Activated CD4-positive, alpha-beta memory T cell treated with anti-CD3 and anti-CD28 coated beads, Interleukin-2, amount 10 ng/mL, durations not matched to agents 7 days and 5 days (primary cell): ENCODE measurements at regions of chr12 and their contacts with region 1.

Region 1: GRCh38 chr12:11202811-11203210 is 16.1 kb upstream of the TAS2R42 start:
- DNase-seq: no peak
- H3K4me3 Mint-ChIP-seq: no peak overlapping the region
- H3K27ac Mint-ChIP-seq: no peak overlapping the region
- H3K4me1 Mint-ChIP-seq: no peaks in the 10 kb centered on the region
- H3K27me3 Mint-ChIP-seq: no peaks in the 10 kb centered on the region

Region 2: DNA sequence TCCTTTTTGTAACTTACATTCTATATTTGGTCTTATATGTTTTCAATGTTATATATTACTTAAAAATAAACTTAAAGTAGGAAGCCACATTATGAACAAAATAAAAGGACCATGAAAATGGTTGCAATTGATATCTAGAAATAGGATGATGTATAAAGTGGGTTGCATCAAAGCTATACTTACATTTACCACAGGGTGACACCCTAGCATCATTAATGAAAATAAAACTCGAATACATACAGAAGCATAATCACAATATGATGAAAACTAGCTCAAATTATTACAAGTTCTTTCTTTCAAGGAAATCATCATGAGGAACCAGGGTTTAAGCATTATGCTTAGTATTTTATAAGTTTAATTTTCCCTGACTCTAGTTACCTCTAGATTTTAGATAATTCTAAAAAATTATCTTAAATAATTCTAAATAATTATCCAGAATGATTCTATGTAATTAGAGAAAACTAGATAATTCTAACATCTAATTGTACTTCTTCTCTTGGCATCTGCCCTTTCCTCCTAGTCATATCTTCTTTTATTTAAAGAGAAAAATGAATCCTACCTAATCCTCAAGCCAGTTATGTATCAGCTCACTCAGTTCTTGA is 431.6 kb before region 1 on chr12:
- CTCF ChIA-PET with region 1: interaction called, 26 read pairs
- POLR2A ChIA-PET with region 1: no interaction called
- DNase-seq: no peak
- H3K4me3 Mint-ChIP-seq: no peak overlapping the region
- H3K27ac Mint-ChIP-seq: no peak overlapping the region
- H3K4me1 Mint-ChIP-seq: no peaks in the 10 kb centered on the region
- H3K27me3 Mint-ChIP-seq: peaks cover 44% of the 10 kb centered on the region

Region 3: GRCh38 chr12:11130999-11131398 is 71.8 kb before region 1 on chr12:
- CTCF ChIA-PET with region 1: no interaction called
- POLR2A ChIA-PET with region 1: no interaction called
- DNase-seq: no peak
- H3K4me3 Mint-ChIP-seq: no peak overlapping the region
- H3K27ac Mint-ChIP-seq: no peak overlapping the region
- H3K4me1 Mint-ChIP-seq: no peaks in the 10 kb centered on the region
- H3K27me3 Mint-ChIP-seq: no peaks in the 10 kb centered on the region

Region 4: DNA sequence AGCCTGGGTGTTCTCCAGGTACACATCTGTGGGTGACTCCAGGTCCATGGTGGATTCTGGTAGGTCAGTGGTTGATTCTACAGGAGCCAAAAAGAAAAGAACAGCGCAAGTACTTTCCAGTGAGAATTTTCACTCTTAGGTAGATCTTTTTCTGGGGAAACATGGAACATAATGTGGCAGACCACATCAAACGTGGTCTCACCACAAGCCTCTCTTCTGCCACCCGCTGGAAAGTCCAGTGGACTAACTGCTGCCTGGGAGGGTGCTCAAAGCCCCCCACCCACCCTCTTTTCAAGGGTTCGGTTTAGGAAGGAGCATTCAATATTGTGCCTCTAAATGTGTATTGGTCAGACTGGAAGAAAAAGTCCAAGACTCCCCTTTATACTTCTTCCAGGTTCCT is 228.7 kb after region 1 on chr12:
- CTCF ChIA-PET with region 1: no interaction called
- POLR2A ChIA-PET with region 1: no interaction called
- DNase-seq: no peak
- H3K4me3 Mint-ChIP-seq: no peak overlapping the region
- H3K27ac Mint-ChIP-seq: no peak overlapping the region
- H3K4me1 Mint-ChIP-seq: no peaks in the 10 kb centered on the region
- H3K27me3 Mint-ChIP-seq: peaks cover 8% of the 10 kb centered on the region